ENCODE measurements at regions of chr14 and their contacts with region 1.

Region 1: GRCh38 chr14:58637391-58638230 is at the start of gene DACT1:
- DNase-seq: peak; percentile 92
- H3K4me3 ChIP-seq: peak within 1 kb of the TSS; percentile 78 to 87 (median 84)
- H3K27ac ChIP-seq: peak within 1 kb of the TSS; percentile 82 to 93 (median 89)
- H3K4me1 ChIP-seq: peaks cover 18 to 45% (median 36%) of the 10 kb centered on the region in 4 donors
- H3K27me3 ChIP-seq: no peaks in the 10 kb centered on the region
- CTCF ChIP-seq: no peak
- EP300 ChIP-seq: no peak
- POLR2A ChIP-seq: no peak
- total RNA-seq, gene DACT1: 5.0 to 22.7 (median 8.6) TPM

Region 2: DNA sequence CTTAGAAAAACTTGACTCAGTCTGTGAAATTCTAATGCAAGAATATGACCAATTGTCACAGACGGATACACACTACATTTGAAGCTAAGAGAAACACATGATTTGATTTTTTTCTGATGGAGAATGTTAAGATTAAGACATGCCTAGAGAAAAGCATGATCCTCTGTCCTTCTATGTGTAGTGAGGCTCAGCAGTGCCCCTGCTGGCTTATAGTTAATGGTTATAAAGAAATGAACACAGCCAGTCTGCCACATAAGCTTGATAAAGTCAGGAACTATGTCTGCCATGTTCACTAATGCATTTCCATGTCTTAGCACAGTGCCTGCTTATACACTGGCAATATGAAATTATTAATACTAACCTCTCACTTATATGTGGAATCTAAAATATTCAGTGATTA is 382.8 kb after region 1 on chr14:
- intact Hi-C with region 1: loop called (anchors 5 kb)
- DNase-seq: no peak
- H3K4me3 ChIP-seq: no peak overlapping the region
- H3K27ac ChIP-seq: no peak overlapping the region
- H3K4me1 ChIP-seq: no peaks in the 10 kb centered on the region
- H3K27me3 ChIP-seq: peaks cover 0 to 4% (median 0%) of the 10 kb centered on the region in 4 donors
- CTCF ChIP-seq: peak in 1 of 3 experiments; percentile 37
- EP300 ChIP-seq: no peak
- POLR2A ChIP-seq: no peak

Measured in esophagus muscularis mucosa (tissue), 4 donors.